ENCODE measurements at regions of chr17 and their contacts with region 1.

Region 1: GRCh38 chr17:63834431-63835166 is 7.1 kb upstream of the FTSJ3 start:
- DNase-seq: peak; percentile 80
- H3K4me3 Mint-ChIP-seq: no peak overlapping the region
- H3K27ac Mint-ChIP-seq: peak overlapping the region; percentile 70
- H3K4me1 Mint-ChIP-seq: peaks cover 61% of the 10 kb centered on the region
- H3K27me3 Mint-ChIP-seq: no peaks in the 10 kb centered on the region

Region 2: DNA sequence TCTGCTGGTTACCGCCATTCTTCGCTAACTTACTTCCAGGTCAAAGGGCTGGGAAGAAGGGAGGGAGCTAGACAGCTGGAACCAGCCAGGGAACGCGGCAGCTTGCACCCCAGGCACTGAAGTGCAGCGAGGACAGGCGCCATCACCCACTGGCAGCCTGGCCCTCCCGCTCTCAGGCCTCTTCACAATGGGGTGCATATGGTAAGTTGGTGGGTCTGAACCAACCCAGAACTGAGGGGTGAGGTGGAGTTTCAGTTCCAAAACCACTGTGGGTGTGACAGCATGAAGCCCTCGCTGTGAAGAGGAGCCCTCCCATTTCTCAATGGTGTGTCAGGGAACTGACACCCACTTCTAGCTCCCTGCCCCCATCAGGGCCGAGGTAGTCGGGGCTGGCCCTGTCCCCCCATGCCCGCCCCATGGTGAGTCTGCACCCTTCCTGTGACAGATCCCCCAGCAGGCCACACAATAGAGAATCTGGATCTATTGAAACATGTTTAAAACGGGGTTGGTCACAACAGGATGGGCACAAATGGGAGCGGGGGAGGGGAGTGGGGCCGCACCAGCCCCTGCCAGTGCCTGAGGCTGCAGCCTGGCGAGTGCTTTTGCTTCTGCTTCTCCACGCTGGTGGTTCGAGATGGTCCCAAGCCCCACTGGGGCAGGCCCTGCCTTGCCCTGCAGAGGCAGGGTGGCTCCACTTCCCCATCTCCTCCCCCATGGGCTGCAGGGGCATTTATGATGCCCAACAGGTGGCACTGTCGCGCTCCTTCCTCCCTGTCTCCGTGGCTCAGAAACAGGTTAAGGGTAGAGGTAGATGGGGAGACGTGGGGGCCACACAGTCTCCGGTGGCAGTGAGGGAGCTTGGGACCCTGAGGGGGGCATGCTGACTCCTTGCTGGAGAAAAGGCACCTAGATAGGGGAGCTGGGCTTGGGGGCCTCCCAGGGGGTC is 137.0 kb before region 1 on chr17:
- CTCF ChIA-PET with region 1: interaction called, 10 read pairs
- DNase-seq: peak; percentile 91
- H3K4me3 Mint-ChIP-seq: peak overlapping the region; percentile 93
- H3K27ac Mint-ChIP-seq: peak overlapping the region; percentile 97
- H3K4me1 Mint-ChIP-seq: peaks cover 54% of the 10 kb centered on the region
- H3K27me3 Mint-ChIP-seq: peaks cover 13% of the 10 kb centered on the region

Measured in activated naive CD4-positive, alpha-beta T cell treated with anti-CD3 and anti-CD28 coated beads, Interleukin-2, amount 10 ng/mL, durations not matched to agents 7 days and 5 days (primary cell).